Activated B cell treated with CpG ODN at 0.5 μM for 24 hours (primary cell): ENCODE measurements at regions of chr1 and their contacts with region 1.

Region 1: DNA sequence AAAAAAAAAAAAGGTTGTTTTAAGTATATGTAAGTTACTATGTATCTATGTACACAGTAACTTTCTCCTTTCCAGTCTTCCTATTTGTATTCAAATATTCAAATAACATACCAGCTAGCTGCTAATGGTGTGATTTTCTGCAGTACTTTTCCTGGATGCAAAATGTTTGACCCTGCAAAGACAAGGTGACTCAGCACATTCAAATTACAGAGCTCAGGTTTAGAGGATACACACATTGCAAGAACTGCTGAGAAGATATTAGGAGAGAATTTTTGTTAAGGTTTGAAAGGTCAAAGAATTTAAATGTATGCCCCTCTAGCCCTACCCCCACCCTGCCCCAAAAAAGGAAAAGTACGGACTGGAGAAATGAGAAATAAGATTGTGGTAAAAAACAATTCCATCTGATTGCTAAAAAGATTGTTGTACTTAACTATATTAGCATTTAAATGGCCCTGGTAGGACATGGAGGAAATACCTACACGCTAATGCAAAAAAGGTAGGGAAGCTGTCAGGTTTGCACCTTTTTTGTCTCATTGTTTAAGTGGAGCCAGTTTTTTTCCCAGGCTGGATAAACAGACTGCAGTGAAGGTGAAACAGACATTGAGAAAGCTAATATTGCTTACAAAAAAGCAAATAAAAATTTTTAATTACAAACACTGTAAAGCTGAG is 45.6 kb downstream of the ZNF281 start:
- DNase-seq: no peak
- ATAC-seq: no peak
- H3K4me3 Mint-ChIP-seq: no peak overlapping the region
- H3K27ac Mint-ChIP-seq: no peak overlapping the region
- H3K4me1 Mint-ChIP-seq: peaks cover 9% of the 10 kb centered on the region
- H3K27me3 Mint-ChIP-seq: no peaks in the 10 kb centered on the region
- CTCF ChIP-seq: no peak

Region 2: GRCh38 chr1:200400556-200400955 is 36.3 kb after region 1 on chr1:
- CTCF ChIA-PET with region 1: no interaction called
- POLR2A ChIA-PET with region 1: no interaction called
- intact Hi-C with region 1: loop called (anchors 5 kb)
- DNase-seq: no peak
- ATAC-seq: no peak
- H3K4me3 Mint-ChIP-seq: no peak overlapping the region
- H3K27ac Mint-ChIP-seq: no peak overlapping the region
- H3K4me1 Mint-ChIP-seq: peaks cover 9% of the 10 kb centered on the region
- H3K27me3 Mint-ChIP-seq: no peaks in the 10 kb centered on the region
- CTCF ChIP-seq: no peak